OCI-LY7 (cell line): ENCODE measurements at regions of chr3 and their contacts with region 1.

Region 1: DNA sequence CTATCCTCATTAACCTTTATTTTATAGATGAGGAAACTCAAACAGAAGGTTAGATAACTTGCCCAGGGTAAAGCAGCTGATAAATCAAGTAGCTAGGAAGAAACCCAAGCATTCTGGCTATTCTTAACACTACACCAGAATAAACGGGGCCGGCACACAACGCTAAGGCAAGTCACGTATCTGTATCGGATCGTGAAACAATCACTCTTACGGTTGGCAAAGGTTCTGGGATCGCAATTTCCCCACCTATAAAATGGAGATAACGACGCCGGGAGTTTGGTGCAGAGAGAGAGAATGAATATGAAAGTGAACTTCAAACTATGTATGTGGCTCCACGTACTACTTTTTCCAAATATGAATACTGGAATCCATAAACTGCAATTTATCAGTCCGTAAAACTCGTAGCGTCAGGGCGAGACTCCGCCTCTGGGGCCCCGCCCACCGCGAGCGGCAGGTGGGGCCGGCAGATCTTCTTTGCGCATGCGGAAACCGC is 252 bp upstream of the ARMC8 start:
- DNase-seq: peak; percentile 92
- H3K4me3 ChIP-seq: peak overlapping the region; percentile 96
- H3K27ac ChIP-seq: peak overlapping the region; percentile 52
- H3K4me1 ChIP-seq: peaks cover 23% of the 10 kb centered on the region
- CTCF ChIP-seq: no peak

Region 2: DNA sequence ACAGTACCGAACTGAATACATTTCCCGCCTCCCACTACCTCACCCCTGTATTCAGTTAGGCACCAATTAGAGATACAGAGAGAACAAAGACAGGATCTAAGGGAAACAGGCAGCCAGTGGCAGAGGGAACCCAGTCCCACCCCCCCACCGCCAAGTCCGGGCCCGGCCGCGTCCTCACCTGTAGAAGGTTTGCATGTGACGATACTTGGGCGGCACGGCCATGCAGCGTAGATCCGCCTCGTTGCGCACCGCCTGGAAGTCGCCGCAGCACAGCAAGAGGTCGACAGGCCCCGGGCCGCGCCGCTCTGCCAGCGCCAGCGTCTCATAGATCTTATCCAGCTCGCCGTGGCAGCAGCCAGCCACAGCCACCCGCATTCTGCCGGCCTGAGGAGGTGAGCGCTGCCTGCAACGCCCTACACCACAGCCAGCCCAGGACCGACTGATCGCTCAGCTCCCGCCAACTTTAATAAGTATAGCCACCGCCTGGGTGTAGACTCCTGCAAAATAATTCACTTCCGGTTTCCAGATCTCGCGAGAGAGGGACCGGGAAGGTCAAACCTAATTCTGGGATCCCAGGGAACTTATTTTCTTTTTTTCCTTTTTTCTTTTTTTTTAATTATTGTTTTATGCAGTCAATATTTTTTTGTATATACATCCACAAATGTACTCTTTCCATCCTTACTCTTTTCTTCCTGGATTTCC is 12.3 kb before region 1 on chr3 and contains the start of gene DBR1:
- CTCF ChIA-PET with region 1: no interaction called
- POLR2A ChIA-PET with region 1: interaction called, 13 read pairs
- intact Hi-C with region 1: no loop called
- DNase-seq: peak; percentile 92
- H3K4me3 ChIP-seq: peak within 1 kb of the TSS; percentile 85
- H3K27ac ChIP-seq: peak within 1 kb of the TSS; percentile 85
- H3K4me1 ChIP-seq: peaks cover 28% of the 10 kb centered on the region
- CTCF ChIP-seq: no peak
- total RNA-seq, gene DBR1: 13.6 and 21.4 TPM in 2 replicates

Region 3: DNA sequence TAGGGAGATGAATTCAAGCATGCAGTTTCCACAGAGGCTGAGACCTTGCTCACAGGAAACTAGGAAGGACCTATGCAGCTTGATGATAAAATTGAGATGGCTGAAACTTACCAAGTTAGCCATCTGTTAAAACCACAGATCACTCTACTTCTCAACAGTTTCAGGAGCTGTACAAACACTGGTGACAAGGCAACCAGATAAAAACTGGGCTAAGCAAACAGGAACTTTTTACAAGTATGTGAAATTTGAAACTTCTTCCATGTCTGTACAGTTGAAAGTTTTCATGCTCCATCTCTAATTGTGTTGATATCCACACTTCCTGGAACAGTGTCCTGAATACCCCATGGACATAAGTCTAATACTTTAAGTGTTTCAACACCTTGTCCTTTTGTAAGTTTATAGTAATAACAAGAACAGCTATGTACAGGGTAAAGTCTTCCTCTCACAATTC is 499.9 kb after region 1 on chr3:
- CTCF ChIA-PET with region 1: no interaction called
- POLR2A ChIA-PET with region 1: no interaction called
- intact Hi-C with region 1: loop called (anchors 10 kb)
- DNase-seq: peak; percentile 61
- H3K4me3 ChIP-seq: no peak overlapping the region
- H3K27ac ChIP-seq: peak overlapping the region; percentile 48
- H3K4me1 ChIP-seq: peaks cover 15% of the 10 kb centered on the region
- CTCF ChIP-seq: no peak